ENCODE measurements at regions of chr17 and their contacts with region 1.

Region 1: DNA sequence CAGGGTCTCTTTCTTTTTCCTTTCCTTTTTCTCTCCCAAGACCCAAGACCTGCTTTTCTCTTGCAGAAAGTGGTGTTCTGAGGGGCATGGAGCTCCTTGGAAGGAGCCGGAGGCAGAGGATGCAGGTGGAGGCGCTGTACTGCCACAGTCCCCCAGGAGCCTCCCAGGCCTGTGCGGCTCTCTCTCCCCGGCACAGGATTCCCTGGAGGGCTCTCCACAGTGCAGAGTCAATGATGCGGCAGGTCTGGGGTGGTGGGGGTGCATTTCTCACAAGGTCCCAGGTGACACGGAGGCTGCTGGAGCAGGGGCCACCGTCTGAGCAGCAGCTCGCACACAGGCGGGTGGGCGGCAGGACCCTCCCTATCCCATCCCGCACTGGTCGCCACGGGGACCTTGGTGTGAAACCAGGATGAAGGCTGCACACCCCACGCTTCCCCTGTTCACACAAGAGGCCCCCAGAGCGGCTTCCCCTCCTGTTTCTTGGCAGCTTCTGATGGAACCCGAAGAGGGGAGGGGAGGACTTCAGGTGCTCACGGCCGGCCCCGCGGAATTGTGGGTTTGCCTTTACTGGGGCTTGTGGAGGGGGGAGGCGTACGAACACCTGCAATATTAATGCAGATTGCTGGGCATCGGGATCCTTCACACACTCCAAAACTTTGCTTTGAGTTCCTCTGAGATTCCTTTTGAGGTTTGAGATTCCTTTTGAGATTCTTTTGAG is 186.9 kb downstream of the ENGASE start:
- DNase-seq: no peak
- ATAC-seq: no peak
- H3K4me3 ChIP-seq: no peak overlapping the region
- H3K27ac ChIP-seq: no peak overlapping the region
- H3K4me1 ChIP-seq: no peaks in the 10 kb centered on the region
- H3K27me3 ChIP-seq: peaks cover 0 to 77% (median 46%) of the 10 kb centered on the region in 7 donors
- CTCF ChIP-seq: no peak

Region 2: DNA sequence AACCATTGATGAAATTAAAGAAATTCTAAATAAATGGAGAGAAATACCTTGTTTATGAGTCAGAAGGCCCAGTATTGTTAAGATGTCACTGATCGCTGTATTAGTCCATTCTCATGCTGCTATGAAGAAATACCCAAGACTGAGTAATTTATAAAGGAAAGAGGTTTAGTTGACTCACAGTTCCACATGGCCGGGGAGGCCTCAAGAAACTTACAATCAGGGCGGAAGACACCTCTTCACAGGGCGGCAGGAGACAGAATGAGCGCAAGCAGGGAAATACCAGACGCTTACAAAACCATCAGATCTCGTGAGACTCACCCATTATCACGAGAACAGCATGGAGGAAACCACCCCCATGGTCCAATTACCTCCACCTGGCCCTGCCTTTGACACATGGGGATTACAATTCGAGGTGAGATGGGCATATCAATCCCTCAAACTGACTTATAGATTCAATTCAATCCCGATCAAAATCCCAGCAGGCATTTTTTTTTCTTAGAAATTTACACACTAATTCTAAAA is 29.7 kb before region 1 on chr17:
- intact Hi-C with region 1: no loop called
- DNase-seq: no peak
- ATAC-seq: no peak
- H3K4me3 ChIP-seq: no peak overlapping the region
- H3K27ac ChIP-seq: no peak overlapping the region
- H3K4me1 ChIP-seq: no peaks in the 10 kb centered on the region
- H3K27me3 ChIP-seq: peaks cover 0 to 34% (median 18%) of the 10 kb centered on the region in 7 donors
- CTCF ChIP-seq: no peak

Region 3: GRCh38 chr17:79335456-79335855 is 73.9 kb after region 1 on chr17:
- intact Hi-C with region 1: loop called in 1 of 10 experiments (anchors 2 kb)
- DNase-seq: no peak
- ATAC-seq: no peak
- H3K4me3 ChIP-seq: no peak overlapping the region
- H3K27ac ChIP-seq: no peak overlapping the region
- H3K4me1 ChIP-seq: no peaks in the 10 kb centered on the region
- H3K27me3 ChIP-seq: peaks cover 0 to 78% (median 48%) of the 10 kb centered on the region in 7 donors
- CTCF ChIP-seq: no peak